T-cell (primary cell): ENCODE measurements at regions of chr15 and their contacts with region 1.

Region 1: GRCh38 chr15:34439878-34440277 is 2.3 kb upstream of the GOLGA8A start:
- DNase-seq: no peak
- ATAC-seq: no peak
- H3K4me3 ChIP-seq: no peak overlapping the region
- H3K4me3 Mint-ChIP-seq: no peak overlapping the region
- H3K27ac ChIP-seq: no peak overlapping the region
- H3K27ac Mint-ChIP-seq: no peak overlapping the region
- H3K4me1 ChIP-seq: peaks cover 3 to 13% of the 10 kb centered on the region in 2 experiments
- H3K4me1 Mint-ChIP-seq: peaks cover 13 to 20% (median 19%) of the 10 kb centered on the region in 3 donors
- H3K27me3 ChIP-seq: peaks cover 0 to 3% of the 10 kb centered on the region in 2 experiments
- H3K27me3 Mint-ChIP-seq: peaks cover 17 to 19% of the 10 kb centered on the region in 2 donors

Region 2: DNA sequence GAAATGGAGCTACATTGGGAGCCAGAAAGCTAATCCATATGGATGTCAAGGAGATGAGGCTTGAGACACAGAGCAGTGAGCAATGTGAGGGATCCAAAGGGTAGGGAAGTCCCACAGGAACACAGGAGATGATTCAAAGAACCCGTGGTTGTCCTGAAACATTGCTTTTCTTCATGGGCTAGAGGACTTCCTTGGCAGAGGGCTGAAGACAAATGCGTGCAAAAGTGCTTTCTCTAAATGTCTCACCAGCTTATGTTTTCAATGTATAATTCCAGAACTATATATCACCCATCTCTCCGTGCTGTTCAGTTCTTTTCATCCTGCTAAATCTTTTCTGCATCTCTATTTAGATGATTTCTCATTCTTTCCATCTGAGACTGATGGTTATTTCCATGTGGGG is 43.8 kb after region 1 on chr15:
- CTCF ChIA-PET with region 1: no interaction called
- POLR2A ChIA-PET with region 1: no interaction called
- DNase-seq: no peak
- ATAC-seq: no peak
- H3K4me3 ChIP-seq: no peak overlapping the region
- H3K4me3 Mint-ChIP-seq: no peak overlapping the region
- H3K27ac ChIP-seq: no peak overlapping the region
- H3K27ac Mint-ChIP-seq: no peak overlapping the region
- H3K4me1 ChIP-seq: no peaks in the 10 kb centered on the region
- H3K4me1 Mint-ChIP-seq: no peaks in the 10 kb centered on the region
- H3K27me3 ChIP-seq: peaks cover 2 to 5% of the 10 kb centered on the region in 2 experiments
- H3K27me3 Mint-ChIP-seq: peaks cover 56 to 65% of the 10 kb centered on the region in 2 donors

Region 3: DNA sequence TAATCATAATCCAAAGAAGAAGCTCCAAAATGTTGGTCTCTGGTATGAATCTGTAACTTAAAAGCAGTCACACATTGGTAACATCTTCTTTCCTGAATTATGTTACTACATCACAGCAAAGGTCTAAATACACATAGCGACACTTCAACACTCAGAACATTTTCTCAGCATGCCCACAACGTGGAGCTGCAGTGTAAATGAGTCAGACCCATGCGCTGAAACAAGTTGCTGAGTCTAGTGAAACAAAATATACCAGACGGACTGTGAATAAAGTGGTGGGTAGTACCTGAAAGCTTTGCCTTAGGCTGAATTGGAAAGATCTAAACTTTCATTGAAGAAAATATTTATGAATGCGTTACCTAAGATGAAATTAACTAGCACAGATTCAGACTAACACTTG is 176.7 kb after region 1 on chr15:
- CTCF ChIA-PET with region 1: no interaction called
- POLR2A ChIA-PET with region 1: no interaction called
- DNase-seq: no peak
- ATAC-seq: no peak
- H3K4me3 ChIP-seq: no peak overlapping the region
- H3K4me3 Mint-ChIP-seq: no peak overlapping the region
- H3K27ac ChIP-seq: no peak overlapping the region
- H3K27ac Mint-ChIP-seq: no peak overlapping the region
- H3K4me1 ChIP-seq: no peaks in the 10 kb centered on the region
- H3K4me1 Mint-ChIP-seq: no peaks in the 10 kb centered on the region
- H3K27me3 ChIP-seq: peaks cover 0 to 6% of the 10 kb centered on the region in 2 experiments
- H3K27me3 Mint-ChIP-seq: peaks cover 21 to 38% of the 10 kb centered on the region in 2 donors

Region 4: DNA sequence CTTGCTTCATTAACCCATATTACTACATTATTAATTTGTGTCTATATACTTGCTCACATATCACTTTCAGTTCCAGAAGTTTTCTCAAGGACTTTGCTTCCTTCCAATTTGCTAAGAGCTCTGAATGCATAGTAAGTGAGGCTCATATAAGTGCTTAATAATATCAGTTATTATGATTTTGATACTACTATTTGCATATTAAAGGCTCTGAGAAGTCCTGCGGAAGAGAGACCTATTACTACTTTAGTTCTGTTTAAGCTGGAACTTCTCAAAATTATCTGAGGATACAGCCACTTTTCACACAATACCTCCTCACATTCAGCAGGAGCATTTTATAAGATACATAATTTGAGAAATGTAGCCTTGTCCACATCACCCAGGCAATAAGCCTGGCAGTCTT is 233.4 kb after region 1 on chr15:
- CTCF ChIA-PET with region 1: no interaction called
- POLR2A ChIA-PET with region 1: no interaction called
- DNase-seq: no peak
- ATAC-seq: no peak
- H3K4me3 ChIP-seq: no peak overlapping the region
- H3K4me3 Mint-ChIP-seq: no peak overlapping the region
- H3K27ac ChIP-seq: no peak overlapping the region
- H3K27ac Mint-ChIP-seq: no peak overlapping the region
- H3K4me1 ChIP-seq: no peaks in the 10 kb centered on the region
- H3K4me1 Mint-ChIP-seq: no peaks in the 10 kb centered on the region
- H3K27me3 ChIP-seq: peaks cover 0 to 5% of the 10 kb centered on the region in 2 experiments
- H3K27me3 Mint-ChIP-seq: peaks cover 25% of the 10 kb centered on the region in 2 donors

Region 5: DNA sequence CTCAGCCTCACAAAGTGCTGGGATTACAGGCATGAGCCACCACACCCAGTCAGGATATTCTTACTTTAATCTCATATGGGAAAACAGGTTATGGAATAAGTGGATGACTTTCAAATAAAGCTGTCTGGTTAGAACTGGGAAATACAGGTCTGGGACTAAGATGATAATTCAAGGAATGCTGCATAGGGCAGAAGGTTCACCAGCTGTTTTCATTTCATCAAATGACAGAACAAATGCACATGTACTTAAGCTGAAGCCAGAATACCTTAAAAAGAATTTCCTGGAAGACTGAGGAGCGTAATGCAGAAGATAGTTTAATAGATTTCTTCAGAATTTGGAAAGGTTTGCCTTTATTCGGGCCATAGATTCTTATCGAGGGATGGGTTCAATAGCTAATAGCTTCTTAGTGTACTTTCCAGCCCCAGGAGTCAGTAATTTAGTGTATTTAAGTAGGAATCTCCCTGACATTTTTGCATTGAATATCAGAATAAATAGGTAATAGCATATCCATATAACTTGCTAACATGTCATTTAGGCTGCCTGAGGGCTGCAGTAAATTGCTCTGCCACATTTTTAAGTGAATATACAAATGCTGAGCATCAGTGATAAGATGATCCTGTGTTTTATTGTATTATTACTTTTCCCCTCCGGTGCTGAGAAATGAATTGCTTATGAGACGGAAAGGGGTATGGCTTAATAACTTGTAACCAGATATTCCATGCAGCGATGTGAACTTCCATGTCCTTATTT is 588.5 kb after region 1 on chr15:
- CTCF ChIA-PET with region 1: no interaction called
- POLR2A ChIA-PET with region 1: interaction called in 1 of 2 experiments, 14 read pairs
- DNase-seq: no peak
- ATAC-seq: no peak
- H3K4me3 ChIP-seq: no peak overlapping the region
- H3K4me3 Mint-ChIP-seq: no peak overlapping the region
- H3K27ac ChIP-seq: no peak overlapping the region
- H3K27ac Mint-ChIP-seq: no peak overlapping the region
- H3K4me1 ChIP-seq: no peaks in the 10 kb centered on the region
- H3K4me1 Mint-ChIP-seq: no peaks in the 10 kb centered on the region
- H3K27me3 ChIP-seq: no peaks in the 10 kb centered on the region
- H3K27me3 Mint-ChIP-seq: peaks cover 2 to 4% of the 10 kb centered on the region in 2 donors